Mammary epithelial cell (primary cell): ENCODE measurements at regions of chrX and their contacts with region 1.

Region 1: GRCh38 chrX:78092296-78092695 is 11.8 kb upstream of the PGK1 start:
- DNase-seq: peak; percentile 90
- H3K4me3 ChIP-seq: no peak overlapping the region
- H3K27ac ChIP-seq: no peak overlapping the region
- H3K4me1 ChIP-seq: peaks cover 11% of the 10 kb centered on the region
- H3K27me3 ChIP-seq: no peaks in the 10 kb centered on the region
- CTCF ChIP-seq: peak; percentile 24 to 53

Region 2: GRCh38 chrX:76555814-76556213 is 1536.5 kb before region 1 on chrX:
- CTCF ChIA-PET with region 1: no interaction called
- dilution Hi-C with region 1: no loop called
- in situ Hi-C with region 1: no loop called
- intact Hi-C with region 1: loop called (anchors 10 kb)
- DNase-seq: peak; percentile 12
- H3K4me3 ChIP-seq: no peak overlapping the region
- H3K27ac ChIP-seq: no peak overlapping the region
- H3K4me1 ChIP-seq: no peaks in the 10 kb centered on the region
- H3K27me3 ChIP-seq: no peaks in the 10 kb centered on the region
- CTCF ChIP-seq: peak; percentile 24 to 28

Region 3: DNA sequence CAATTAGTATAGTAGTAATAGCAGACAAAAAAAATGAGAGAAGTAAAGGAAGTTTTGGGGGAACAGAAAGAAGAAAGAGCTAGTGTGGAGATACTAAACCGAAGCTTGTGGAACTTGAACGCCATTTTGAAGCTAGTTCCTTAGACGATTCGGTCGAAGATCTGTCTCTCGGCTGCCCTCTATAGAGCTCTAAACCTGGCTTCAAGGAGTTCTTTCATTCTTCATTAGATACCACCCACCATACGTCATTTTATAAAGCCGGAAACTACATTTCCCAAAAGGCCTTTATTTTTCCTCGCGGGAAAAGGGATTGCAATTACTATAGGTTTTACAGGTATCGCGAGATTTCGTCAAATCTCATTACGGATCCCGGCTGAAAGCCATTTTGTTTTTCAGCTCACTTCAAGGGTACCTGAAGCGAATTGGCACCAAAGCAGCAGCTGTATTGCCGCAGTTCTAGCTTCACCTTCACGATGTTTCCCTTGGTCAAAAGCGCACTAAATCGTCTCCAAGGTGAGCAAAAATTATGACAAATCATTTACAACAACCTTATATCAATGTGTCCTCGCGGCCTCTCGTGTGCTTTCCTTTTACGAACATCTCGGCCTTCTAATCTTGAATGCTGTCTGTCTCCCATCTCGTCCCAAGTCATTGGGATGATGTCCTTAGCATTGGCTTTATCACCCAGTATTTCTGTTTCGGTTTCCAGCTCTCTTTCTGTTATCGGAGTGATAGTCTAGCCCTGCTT is 193.0 kb before region 1 on chrX and contains the start of gene COX7B:
- CTCF ChIA-PET with region 1: no interaction called
- dilution Hi-C with region 1: no loop called
- in situ Hi-C with region 1: no loop called
- intact Hi-C with region 1: loop called (anchors 1 kb)
- DNase-seq: peak; percentile 91
- H3K4me3 ChIP-seq: peak within 1 kb of the TSS; percentile 44 to 69 (median 55)
- H3K27ac ChIP-seq: peak within 1 kb of the TSS; percentile 85
- H3K4me1 ChIP-seq: no peaks in the 10 kb centered on the region
- H3K27me3 ChIP-seq: no peaks in the 10 kb centered on the region
- CTCF ChIP-seq: peak; percentile 27 to 46
- total RNA-seq, gene COX7B: 190 to 194 TPM

Region 4: GRCh38 chrX:77910108-77910840 is 182.0 kb before region 1 on chrX and contains the start of gene ATP7A:
- CTCF ChIA-PET with region 1: no interaction called
- dilution Hi-C with region 1: no loop called
- in situ Hi-C with region 1: no loop called
- intact Hi-C with region 1: loop called (anchors 1 kb)
- DNase-seq: peak; percentile 74
- H3K4me3 ChIP-seq: peak within 1 kb of the TSS; percentile 51 to 60 (median 55)
- H3K27ac ChIP-seq: peak within 1 kb of the TSS; percentile 44
- H3K4me1 ChIP-seq: no peaks in the 10 kb centered on the region
- H3K27me3 ChIP-seq: no peaks in the 10 kb centered on the region
- CTCF ChIP-seq: peak; percentile 23 to 57
- total RNA-seq, gene ATP7A: 5.5 to 8.3 TPM

Region 5: DNA sequence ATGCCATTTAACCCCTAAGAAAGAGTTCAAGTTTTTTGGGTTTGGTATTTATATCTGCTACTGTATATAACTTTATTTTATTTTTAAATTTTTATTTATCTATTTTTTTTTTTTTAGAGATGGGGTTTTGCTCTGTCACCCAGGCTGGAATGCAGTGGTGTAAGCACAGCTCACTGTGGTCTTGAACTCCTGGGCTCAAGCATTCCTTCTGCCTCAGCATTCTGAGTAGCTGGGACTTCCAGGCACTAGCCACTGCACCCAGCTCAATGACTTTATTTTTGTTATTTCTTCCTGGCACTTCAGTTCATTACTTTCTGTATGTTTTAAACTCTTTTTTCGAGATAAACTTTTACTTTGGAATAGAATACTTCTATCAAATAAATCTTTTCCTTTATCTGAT is 80.5 kb before region 1 on chrX:
- CTCF ChIA-PET with region 1: no interaction called
- dilution Hi-C with region 1: no loop called
- in situ Hi-C with region 1: no loop called
- intact Hi-C with region 1: no loop called
- DNase-seq: no peak
- H3K4me3 ChIP-seq: no peak overlapping the region
- H3K27ac ChIP-seq: no peak overlapping the region
- H3K4me1 ChIP-seq: no peaks in the 10 kb centered on the region
- H3K27me3 ChIP-seq: no peaks in the 10 kb centered on the region
- CTCF ChIP-seq: no peak

Region 6: DNA sequence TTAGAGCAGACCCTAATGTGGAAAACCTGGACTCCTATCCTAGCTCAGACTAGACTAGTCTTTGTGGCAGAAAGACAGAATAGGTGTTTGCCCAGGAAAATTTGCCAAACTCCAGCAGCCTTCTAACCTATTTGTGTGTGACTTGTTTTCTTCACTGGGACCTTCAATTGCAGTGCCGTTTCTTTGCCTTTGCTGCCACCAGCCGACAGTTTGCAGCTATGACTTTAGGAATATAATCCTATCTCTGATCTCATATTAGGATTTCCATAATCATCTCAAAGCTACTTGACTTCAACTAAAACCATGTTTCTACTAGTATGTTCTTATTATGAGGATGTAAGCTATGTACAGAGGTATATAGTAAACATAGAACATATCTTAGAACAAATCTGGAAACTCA is 62.6 kb before region 1 on chrX:
- CTCF ChIA-PET with region 1: interaction called, 4 read pairs
- dilution Hi-C with region 1: no loop called
- in situ Hi-C with region 1: no loop called
- intact Hi-C with region 1: loop called (anchors 1 kb)
- DNase-seq: peak; percentile 21
- H3K4me3 ChIP-seq: no peak overlapping the region
- H3K27ac ChIP-seq: no peak overlapping the region
- H3K4me1 ChIP-seq: no peaks in the 10 kb centered on the region
- H3K27me3 ChIP-seq: no peaks in the 10 kb centered on the region
- CTCF ChIP-seq: peak; percentile 61 to 65

Region 7: DNA sequence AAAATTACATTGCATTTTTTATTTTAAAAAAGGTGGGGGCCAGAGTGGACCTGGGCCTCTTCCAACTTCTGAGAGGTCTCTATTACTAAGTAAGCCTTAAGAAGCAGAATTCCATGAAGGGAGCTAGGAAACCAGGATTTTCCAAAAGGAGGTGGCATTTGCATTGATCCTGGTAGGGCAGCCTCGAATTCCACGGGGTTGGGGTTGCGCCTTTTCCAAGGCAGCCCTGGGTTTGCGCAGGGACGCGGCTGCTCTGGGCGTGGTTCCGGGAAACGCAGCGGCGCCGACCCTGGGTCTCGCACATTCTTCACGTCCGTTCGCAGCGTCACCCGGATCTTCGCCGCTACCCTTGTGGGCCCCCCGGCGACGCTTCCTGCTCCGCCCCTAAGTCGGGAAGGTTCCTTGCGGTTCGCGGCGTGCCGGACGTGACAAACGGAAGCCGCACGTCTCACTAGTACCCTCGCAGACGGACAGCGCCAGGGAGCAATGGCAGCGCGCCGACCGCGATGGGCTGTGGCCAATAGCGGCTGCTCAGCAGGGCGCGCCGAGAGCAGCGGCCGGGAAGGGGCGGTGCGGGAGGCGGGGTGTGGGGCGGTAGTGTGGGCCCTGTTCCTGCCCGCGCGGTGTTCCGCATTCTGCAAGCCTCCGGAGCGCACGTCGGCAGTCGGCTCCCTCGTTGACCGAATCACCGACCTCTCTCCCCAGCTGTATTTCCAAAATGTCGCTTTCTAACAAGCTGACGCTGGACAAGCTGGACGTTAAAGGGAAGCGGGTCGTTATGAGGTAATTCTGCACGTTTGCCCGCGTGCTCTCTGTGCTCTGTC is 11.5 kb after region 1 on chrX and contains the start of gene PGK1:
- CTCF ChIA-PET with region 1: no interaction called
- dilution Hi-C with region 1: no loop called
- in situ Hi-C with region 1: no loop called
- intact Hi-C with region 1: loop called (anchors 1 kb)
- DNase-seq: peak; percentile 94
- H3K4me3 ChIP-seq: peak within 1 kb of the TSS; percentile 62 to 71 (median 64)
- H3K27ac ChIP-seq: peak within 1 kb of the TSS; percentile 87
- H3K4me1 ChIP-seq: no peaks in the 10 kb centered on the region
- H3K27me3 ChIP-seq: no peaks in the 10 kb centered on the region
- CTCF ChIP-seq: no peak
- total RNA-seq, gene PGK1: 241 to 701 TPM

Region 8: DNA sequence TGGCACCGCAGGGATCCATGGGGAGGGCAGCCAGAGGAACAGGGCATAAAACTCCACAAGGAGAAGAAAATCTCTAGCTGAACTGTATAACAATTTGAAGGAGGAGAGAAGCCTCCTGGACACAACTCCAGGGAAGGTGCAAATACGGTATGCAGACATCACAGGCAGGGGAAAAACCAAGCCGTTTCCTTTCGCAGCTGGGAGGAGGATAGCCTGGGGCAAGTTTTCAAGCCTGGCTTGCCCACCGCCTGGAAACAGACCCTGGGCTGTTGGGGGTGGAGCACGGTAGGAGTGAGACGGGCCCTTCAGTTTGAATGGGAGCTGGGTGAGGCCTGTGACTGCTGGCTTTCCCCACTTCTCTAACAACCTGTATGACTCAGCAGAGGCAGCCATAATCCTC is 90.6 kb after region 1 on chrX:
- CTCF ChIA-PET with region 1: no interaction called
- dilution Hi-C with region 1: no loop called
- in situ Hi-C with region 1: no loop called
- intact Hi-C with region 1: no loop called
- DNase-seq: no peak
- H3K4me3 ChIP-seq: no peak overlapping the region
- H3K27ac ChIP-seq: no peak overlapping the region
- H3K4me1 ChIP-seq: no peaks in the 10 kb centered on the region
- H3K27me3 ChIP-seq: no peaks in the 10 kb centered on the region
- CTCF ChIP-seq: no peak

Region 9: GRCh38 chrX:78643096-78643495 is 550.8 kb after region 1 on chrX:
- CTCF ChIA-PET with region 1: no interaction called
- dilution Hi-C with region 1: no loop called
- in situ Hi-C with region 1: no loop called
- intact Hi-C with region 1: no loop called
- DNase-seq: no peak
- H3K4me3 ChIP-seq: no peak overlapping the region
- H3K27ac ChIP-seq: no peak overlapping the region
- H3K4me1 ChIP-seq: no peaks in the 10 kb centered on the region
- H3K27me3 ChIP-seq: no peaks in the 10 kb centered on the region
- CTCF ChIP-seq: no peak